Activated B cell treated with CpG ODN at 0.5 μM for 24 hours (primary cell): ENCODE measurements at regions of chr3 and their contacts with region 1.

Region 1: DNA sequence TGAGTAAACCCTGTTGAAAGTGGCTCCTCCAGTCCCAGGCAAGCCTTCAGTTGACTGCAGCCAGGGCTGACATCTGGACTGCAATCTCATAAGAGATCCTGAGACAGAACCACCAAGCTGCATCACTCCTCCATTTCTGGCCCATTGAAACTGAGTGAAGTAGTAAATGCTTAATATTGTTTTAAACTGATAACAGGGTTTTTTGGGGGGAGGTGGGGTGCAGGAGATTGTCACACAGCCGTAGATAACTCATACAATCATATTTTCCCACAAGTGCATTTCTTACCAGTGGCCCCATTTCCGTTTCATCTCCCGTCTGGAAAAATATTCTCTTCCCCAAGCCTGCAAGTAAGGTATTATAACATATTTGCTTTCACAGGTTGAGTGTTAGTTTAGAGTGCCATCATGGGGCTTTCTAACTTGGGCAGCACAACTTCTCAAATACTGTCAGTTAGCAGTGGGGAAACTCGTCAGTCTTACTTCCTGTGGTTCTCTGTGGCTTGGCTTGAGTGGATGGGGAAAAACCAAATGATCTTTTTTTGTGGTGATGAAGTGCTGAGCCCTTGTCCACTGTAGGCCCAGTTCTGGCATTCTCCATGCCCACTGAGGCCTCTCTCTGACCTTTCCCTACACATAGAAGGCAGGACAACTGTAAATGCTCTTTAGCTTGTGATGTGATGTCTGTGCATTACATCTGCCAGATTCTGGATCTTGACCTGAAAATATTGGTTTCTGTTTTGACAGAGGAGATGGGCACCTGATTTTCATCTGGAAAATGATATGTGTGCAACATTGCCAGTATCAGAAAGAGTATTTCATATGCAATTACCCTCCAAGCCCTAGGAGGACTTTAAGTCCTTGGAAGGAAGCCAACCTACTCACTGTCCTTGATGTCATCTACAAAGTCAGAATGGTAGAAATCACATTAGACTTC is 90.1 kb upstream of the BHLHE40 start:
- DNase-seq: no peak
- ATAC-seq: peak; percentile 68
- H3K4me3 Mint-ChIP-seq: no peak overlapping the region
- H3K27ac Mint-ChIP-seq: peak overlapping the region; percentile 38
- H3K4me1 Mint-ChIP-seq: peaks cover 20% of the 10 kb centered on the region
- H3K27me3 Mint-ChIP-seq: no peaks in the 10 kb centered on the region
- CTCF ChIP-seq: no peak

Region 2: GRCh38 chr3:4551051-4551711 is 338.0 kb before region 1 on chr3:
- CTCF ChIA-PET with region 1: no interaction called
- POLR2A ChIA-PET with region 1: no interaction called
- intact Hi-C with region 1: no loop called
- DNase-seq: no peak
- ATAC-seq: no peak
- H3K4me3 Mint-ChIP-seq: no peak overlapping the region
- H3K27ac Mint-ChIP-seq: peak overlapping the region; percentile 60
- H3K4me1 Mint-ChIP-seq: peaks cover 59% of the 10 kb centered on the region
- H3K27me3 Mint-ChIP-seq: no peaks in the 10 kb centered on the region
- CTCF ChIP-seq: no peak

Region 3: GRCh38 chr3:4904811-4905695 is 15.9 kb after region 1 on chr3:
- CTCF ChIA-PET with region 1: no interaction called
- POLR2A ChIA-PET with region 1: interaction called, 12 read pairs
- intact Hi-C with region 1: no loop called
- DNase-seq: no peak
- ATAC-seq: no peak
- H3K4me3 Mint-ChIP-seq: no peak overlapping the region
- H3K27ac Mint-ChIP-seq: no peak overlapping the region
- H3K4me1 Mint-ChIP-seq: no peaks in the 10 kb centered on the region
- H3K27me3 Mint-ChIP-seq: peaks cover 2% of the 10 kb centered on the region
- CTCF ChIP-seq: no peak